ENCODE measurements at regions of chr6 and their contacts with region 1.

Region 1: DNA sequence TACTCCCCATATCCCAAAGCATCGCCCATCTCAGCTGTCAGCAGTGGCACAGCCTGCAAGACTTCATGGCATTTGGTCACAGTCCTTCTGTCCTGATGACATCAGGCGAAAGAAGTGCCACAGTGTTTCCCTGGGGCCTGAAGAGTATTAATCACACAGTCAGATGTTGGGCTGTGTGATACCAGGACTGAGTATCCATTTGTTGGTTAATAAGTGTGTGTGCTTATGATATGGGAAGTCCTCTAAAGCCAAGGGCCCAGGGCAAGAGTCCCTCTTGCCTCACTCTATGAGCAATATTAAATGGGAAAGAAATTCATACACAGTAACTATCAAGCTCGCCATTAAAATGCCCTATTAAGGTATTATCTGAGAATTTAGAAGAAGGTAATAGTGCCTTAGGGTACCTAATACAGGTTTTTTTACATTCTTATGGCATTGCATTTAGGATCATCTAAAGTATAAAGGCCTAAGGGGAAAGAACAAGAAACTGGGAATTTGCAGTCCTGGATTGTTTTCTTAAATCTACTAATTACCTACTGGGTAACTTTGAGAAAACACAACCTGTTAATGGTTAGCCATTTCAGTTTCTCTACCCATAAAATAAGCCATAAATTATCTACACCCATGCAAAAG is 204.1 kb upstream of the PREP start:
- DNase-seq: peak; percentile 60
- H3K4me3 ChIP-seq: no peak overlapping the region
- H3K27ac ChIP-seq: peak overlapping the region; percentile 80
- H3K4me1 ChIP-seq: peaks cover 34% of the 10 kb centered on the region
- H3K27me3 ChIP-seq: no peaks in the 10 kb centered on the region
- CTCF ChIP-seq: no peak

Region 2: GRCh38 chr6:105522626-105523322 is 84.2 kb before region 1 on chr6:
- CTCF ChIA-PET with region 1: no interaction called
- dilution Hi-C with region 1: no loop called
- in situ Hi-C with region 1: no loop called
- intact Hi-C with region 1: no loop called
- DNase-seq: peak; percentile 70
- H3K4me3 ChIP-seq: no peak overlapping the region
- H3K27ac ChIP-seq: peak overlapping the region; percentile 44
- H3K4me1 ChIP-seq: peaks cover 9% of the 10 kb centered on the region
- H3K27me3 ChIP-seq: no peaks in the 10 kb centered on the region
- CTCF ChIP-seq: no peak

Region 3: GRCh38 chr6:105920071-105920470 is 313.1 kb after region 1 on chr6:
- CTCF ChIA-PET with region 1: no interaction called
- dilution Hi-C with region 1: no loop called
- in situ Hi-C with region 1: no loop called
- intact Hi-C with region 1: no loop called
- DNase-seq: peak; percentile 91
- H3K4me3 ChIP-seq: no peak overlapping the region
- H3K27ac ChIP-seq: no peak overlapping the region
- H3K4me1 ChIP-seq: peaks cover 7% of the 10 kb centered on the region
- H3K27me3 ChIP-seq: no peaks in the 10 kb centered on the region
- CTCF ChIP-seq: no peak

Region 4: GRCh38 chr6:106194949-106195921 is 588.3 kb after region 1 on chr6:
- CTCF ChIA-PET with region 1: no interaction called
- dilution Hi-C with region 1: no loop called
- in situ Hi-C with region 1: no loop called
- intact Hi-C with region 1: loop called (anchors 2 kb)
- DNase-seq: peak; percentile 99
- H3K4me3 ChIP-seq: peak overlapping the region in 1 of 3 experiments; percentile 17
- H3K27ac ChIP-seq: peak overlapping the region; percentile 99
- H3K4me1 ChIP-seq: peaks cover 42% of the 10 kb centered on the region
- H3K27me3 ChIP-seq: no peaks in the 10 kb centered on the region
- CTCF ChIP-seq: no peak

Measured in mammary epithelial cell (primary cell).